Activated B cell treated with CpG ODN at 0.5 μM for 24 hours (primary cell): ENCODE measurements at regions of chr5 and their contacts with region 1.

Region 1: DNA sequence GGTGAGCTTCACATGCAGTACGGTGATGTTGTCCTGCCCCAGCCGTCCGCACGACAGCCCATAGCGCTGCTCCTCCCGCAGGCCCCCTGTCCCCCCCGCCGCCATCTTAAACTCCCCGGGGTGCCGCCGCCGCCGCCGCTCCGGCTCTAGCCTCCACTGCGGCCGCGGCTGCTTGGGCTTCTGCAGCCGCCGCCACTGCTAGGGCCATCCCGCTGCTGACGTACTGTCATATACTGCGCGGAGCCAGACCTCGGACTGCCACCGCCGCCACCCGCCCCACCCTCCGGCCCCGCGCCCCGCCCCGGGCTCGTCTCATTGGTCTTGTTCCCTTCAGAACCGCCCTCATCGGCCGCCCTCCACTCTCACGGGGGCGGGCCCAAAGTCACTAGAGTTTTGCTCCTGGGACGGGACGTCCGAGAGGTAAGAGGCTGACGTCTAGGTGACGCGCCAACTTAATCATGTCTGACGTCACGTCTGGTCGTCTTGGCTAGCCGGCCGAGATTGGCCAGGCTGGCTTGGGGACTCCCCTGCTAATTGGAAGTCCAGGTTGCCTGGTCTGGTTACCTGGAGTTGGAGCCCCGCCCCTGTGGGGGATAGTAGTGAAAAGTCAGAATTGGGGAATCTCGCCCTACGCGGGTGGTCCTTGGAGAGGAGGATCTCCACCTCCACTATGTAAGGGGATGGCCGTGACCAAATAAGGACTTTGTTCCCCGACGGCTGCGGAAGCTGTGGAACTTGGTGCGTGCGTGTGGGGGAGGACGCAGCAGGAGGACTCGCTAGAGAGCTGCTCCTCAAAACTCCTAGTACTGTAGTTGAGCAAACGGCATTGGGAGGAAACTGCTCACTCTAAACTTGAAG is at the start of gene ELL2:
- DNase-seq: peak; percentile 92
- ATAC-seq: peak; percentile 84
- H3K4me3 Mint-ChIP-seq: peak within 1 kb of the TSS; percentile 99
- H3K27ac Mint-ChIP-seq: peak within 1 kb of the TSS; percentile 97
- H3K4me1 Mint-ChIP-seq: peaks cover 48% of the 10 kb centered on the region
- H3K27me3 Mint-ChIP-seq: no peaks in the 10 kb centered on the region
- CTCF ChIP-seq: no peak
- total RNA-seq, gene ELL2: 52.9 and 56.0 TPM in 2 replicates

Region 2: DNA sequence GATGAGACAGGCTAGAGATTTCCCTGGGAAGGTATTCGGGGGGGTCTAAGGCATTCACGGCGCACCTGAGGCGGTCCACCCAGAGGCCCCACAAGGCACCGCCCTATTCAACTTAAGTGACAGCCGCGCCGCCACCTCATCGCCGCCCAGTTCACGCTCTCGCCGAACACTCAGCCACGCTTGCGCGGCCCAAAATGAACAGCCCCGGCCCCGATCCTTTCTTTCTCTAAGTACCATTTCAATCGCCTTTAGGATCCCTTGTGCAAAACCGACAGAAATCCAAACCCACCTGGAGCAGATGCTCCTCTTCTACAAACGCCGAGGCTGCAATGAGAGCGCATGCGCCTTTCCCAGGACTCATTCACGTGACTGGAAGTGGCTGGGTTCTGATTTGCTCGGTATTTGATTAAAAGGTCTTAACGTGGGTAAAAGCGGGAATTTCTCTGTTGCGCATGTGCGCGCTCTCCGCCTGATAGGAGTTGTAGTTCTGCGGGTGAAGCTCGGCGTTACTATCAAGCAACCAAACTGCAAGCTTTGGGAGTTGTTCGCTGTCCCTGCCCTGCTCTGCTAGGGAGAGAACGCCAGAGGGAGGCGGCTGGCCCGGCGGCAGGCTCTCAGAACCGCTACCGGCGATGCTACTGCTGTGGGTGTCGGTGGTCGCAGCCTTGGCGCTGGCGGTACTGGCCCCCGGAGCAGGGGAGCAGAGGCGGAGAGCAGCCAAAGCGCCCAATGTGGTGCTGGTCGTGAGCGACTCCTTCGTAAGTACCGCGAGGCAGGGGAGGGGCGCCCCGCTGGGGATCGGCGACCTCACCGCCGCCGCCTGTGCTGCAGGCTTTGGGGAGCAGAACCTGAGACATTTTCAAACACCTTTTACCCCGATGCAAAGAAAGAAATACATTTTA is 406.9 kb before region 1 on chr5 and contains the starts of genes ARSK and SKIC3:
- CTCF ChIA-PET with region 1: no interaction called
- POLR2A ChIA-PET with region 1: no interaction called
- intact Hi-C with region 1: loop called (anchors 2 kb)
- DNase-seq: peak; percentile 80
- ATAC-seq: peak; percentile 86
- H3K4me3 Mint-ChIP-seq: peak within 1 kb of the TSS; percentile 95
- H3K27ac Mint-ChIP-seq: peak within 1 kb of the TSS; percentile 92
- H3K4me1 Mint-ChIP-seq: peaks cover 43% of the 10 kb centered on the region
- H3K27me3 Mint-ChIP-seq: no peaks in the 10 kb centered on the region
- CTCF ChIP-seq: no peak
- total RNA-seq, gene ARSK: 2.3 and 2.9 TPM in 2 replicates
- total RNA-seq, gene SKIC3: 67.4 and 78.7 TPM in 2 replicates

Region 3: DNA sequence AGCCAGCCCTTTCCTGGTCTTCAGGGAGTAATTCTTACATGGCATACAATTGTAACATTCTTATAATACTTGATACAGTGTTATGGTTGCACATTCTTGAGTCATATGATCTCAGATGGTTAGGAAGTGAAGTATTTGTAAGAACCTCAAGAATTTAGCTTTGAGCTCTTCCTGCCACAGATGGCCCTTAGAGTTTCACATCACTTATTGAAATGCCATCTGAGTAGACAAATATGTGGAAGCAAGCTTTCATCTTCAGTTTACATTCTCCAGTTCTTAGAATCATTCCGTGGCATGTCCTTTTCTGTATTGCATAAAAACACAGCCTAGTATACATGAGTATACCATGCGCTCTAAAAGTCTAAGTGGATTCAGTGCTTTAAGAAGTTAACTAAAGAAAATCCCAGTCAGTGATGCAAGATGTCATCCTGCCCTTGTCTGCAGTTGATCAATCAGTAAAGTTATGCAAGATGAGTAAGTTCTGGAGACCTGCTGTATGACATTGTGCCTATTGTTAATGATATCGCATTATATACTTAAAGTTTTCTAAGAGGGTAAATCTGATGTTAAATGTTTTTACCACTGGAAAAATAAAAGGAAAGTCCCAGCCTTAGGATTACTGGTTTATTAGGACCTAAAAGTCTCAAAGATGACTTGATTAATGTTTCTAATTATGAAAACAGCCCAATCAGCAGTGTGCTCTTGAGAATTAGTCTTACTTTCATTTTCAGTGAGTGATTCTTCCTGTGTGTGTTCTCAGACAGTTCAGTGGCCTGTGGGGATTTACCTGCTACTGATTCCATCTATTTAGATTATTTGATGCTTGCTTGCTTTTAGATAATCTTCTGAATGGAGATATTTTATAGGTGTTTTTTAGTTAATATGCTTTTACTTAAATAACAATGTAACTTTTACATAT is 201.3 kb before region 1 on chr5:
- CTCF ChIA-PET with region 1: no interaction called
- POLR2A ChIA-PET with region 1: interaction called, 10 read pairs
- intact Hi-C with region 1: no loop called
- DNase-seq: no peak
- ATAC-seq: peak; percentile 82
- H3K4me3 Mint-ChIP-seq: peak overlapping the region; percentile 74
- H3K27ac Mint-ChIP-seq: peak overlapping the region; percentile 89
- H3K4me1 Mint-ChIP-seq: peaks cover 42% of the 10 kb centered on the region
- H3K27me3 Mint-ChIP-seq: no peaks in the 10 kb centered on the region
- CTCF ChIP-seq: no peak

Region 4: GRCh38 chr5:95822542-95823181 is 139.2 kb before region 1 on chr5 and contains the start of gene GLRX:
- CTCF ChIA-PET with region 1: no interaction called
- POLR2A ChIA-PET with region 1: no interaction called
- intact Hi-C with region 1: loop called (anchors 2 kb)
- DNase-seq: no peak
- ATAC-seq: peak; percentile 30
- H3K4me3 Mint-ChIP-seq: peak within 1 kb of the TSS; percentile 95
- H3K27ac Mint-ChIP-seq: peak within 1 kb of the TSS; percentile 98
- H3K4me1 Mint-ChIP-seq: peaks cover 72% of the 10 kb centered on the region
- H3K27me3 Mint-ChIP-seq: no peaks in the 10 kb centered on the region
- CTCF ChIP-seq: no peak
- total RNA-seq, gene GLRX: 55.4 and 60.2 TPM in 2 replicates

Region 5: GRCh38 chr5:95870105-95870672 is 91.7 kb before region 1 on chr5:
- CTCF ChIA-PET with region 1: no interaction called
- POLR2A ChIA-PET with region 1: interaction called, 5 read pairs
- intact Hi-C with region 1: loop called (anchors 1 kb)
- DNase-seq: no peak
- ATAC-seq: peak; percentile 33
- H3K4me3 Mint-ChIP-seq: peak overlapping the region; percentile 42
- H3K27ac Mint-ChIP-seq: peak overlapping the region; percentile 76
- H3K4me1 Mint-ChIP-seq: peaks cover 35% of the 10 kb centered on the region
- H3K27me3 Mint-ChIP-seq: no peaks in the 10 kb centered on the region
- CTCF ChIP-seq: no peak

Region 6: GRCh38 chr5:96336351-96336985 is 374.6 kb after region 1 on chr5:
- CTCF ChIA-PET with region 1: interaction called, 16 read pairs
- POLR2A ChIA-PET with region 1: no interaction called
- intact Hi-C with region 1: loop called (anchors 1 kb)
- DNase-seq: no peak
- ATAC-seq: peak; percentile 91
- H3K4me3 Mint-ChIP-seq: no peak overlapping the region
- H3K27ac Mint-ChIP-seq: no peak overlapping the region
- H3K4me1 Mint-ChIP-seq: no peaks in the 10 kb centered on the region
- H3K27me3 Mint-ChIP-seq: peaks cover 6% of the 10 kb centered on the region
- CTCF ChIP-seq: peak; percentile 23

Region 7: GRCh38 chr5:96629774-96630173 is 667.9 kb after region 1 on chr5:
- CTCF ChIA-PET with region 1: no interaction called
- POLR2A ChIA-PET with region 1: no interaction called
- intact Hi-C with region 1: no loop called
- DNase-seq: no peak
- ATAC-seq: no peak
- H3K4me3 Mint-ChIP-seq: no peak overlapping the region
- H3K27ac Mint-ChIP-seq: no peak overlapping the region
- H3K4me1 Mint-ChIP-seq: no peaks in the 10 kb centered on the region
- H3K27me3 Mint-ChIP-seq: peaks cover 5% of the 10 kb centered on the region
- CTCF ChIP-seq: no peak

Region 8: GRCh38 chr5:96662725-96663513 is 701.1 kb after region 1 on chr5:
- CTCF ChIA-PET with region 1: no interaction called
- POLR2A ChIA-PET with region 1: no interaction called
- intact Hi-C with region 1: loop called (anchors 1 kb)
- DNase-seq: peak; percentile 89
- ATAC-seq: peak; percentile 72
- H3K4me3 Mint-ChIP-seq: peak overlapping the region; percentile 98
- H3K27ac Mint-ChIP-seq: peak overlapping the region; percentile 98
- H3K4me1 Mint-ChIP-seq: peaks cover 51% of the 10 kb centered on the region
- H3K27me3 Mint-ChIP-seq: no peaks in the 10 kb centered on the region
- CTCF ChIP-seq: no peak

Region 9: GRCh38 chr5:97644896-97645295 is 1683.0 kb after region 1 on chr5:
- CTCF ChIA-PET with region 1: no interaction called
- POLR2A ChIA-PET with region 1: no interaction called
- intact Hi-C with region 1: no loop called
- DNase-seq: no peak
- ATAC-seq: no peak
- H3K4me3 Mint-ChIP-seq: no peak overlapping the region
- H3K27ac Mint-ChIP-seq: no peak overlapping the region
- H3K4me1 Mint-ChIP-seq: no peaks in the 10 kb centered on the region
- H3K27me3 Mint-ChIP-seq: no peaks in the 10 kb centered on the region
- CTCF ChIP-seq: no peak